ENCODE measurements at regions of chr19 and their contacts with region 1.

Region 1: GRCh38 chr19:19865739-19866481 is at the start of gene ZNF253:
- DNase-seq: peak; percentile 82
- ATAC-seq: peak; percentile 90
- H3K4me3 Mint-ChIP-seq: peak within 1 kb of the TSS; percentile 100
- H3K27ac Mint-ChIP-seq: peak within 1 kb of the TSS; percentile 99
- H3K4me1 Mint-ChIP-seq: peaks cover 34% of the 10 kb centered on the region
- H3K27me3 Mint-ChIP-seq: no peaks in the 10 kb centered on the region
- CTCF ChIP-seq: no peak
- total RNA-seq, gene ZNF253: 24.7 and 26.3 TPM in 2 replicates

Region 2: DNA sequence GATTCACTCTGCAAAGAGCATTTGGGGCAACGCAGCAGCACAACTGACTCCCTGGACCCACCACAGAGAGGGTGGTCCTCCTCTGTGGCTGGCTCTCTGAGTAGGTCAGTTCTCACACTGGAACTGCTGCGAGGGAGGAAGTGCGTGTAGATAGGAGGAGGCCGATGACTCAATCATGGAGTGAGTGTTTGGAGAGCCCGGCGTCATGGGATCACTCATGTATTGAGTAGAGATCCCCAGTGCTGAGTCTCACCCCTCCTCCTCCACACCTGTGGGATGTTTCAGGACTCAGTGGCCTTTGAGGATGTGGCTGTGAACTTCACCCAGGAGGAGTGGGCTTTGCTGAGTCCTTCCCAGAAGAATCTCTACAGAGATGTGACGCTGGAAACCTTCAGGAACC is 188.3 kb before region 1 on chr19:
- CTCF ChIA-PET with region 1: no interaction called
- POLR2A ChIA-PET with region 1: no interaction called
- intact Hi-C with region 1: no loop called
- DNase-seq: no peak
- ATAC-seq: no peak
- H3K4me3 Mint-ChIP-seq: no peak overlapping the region
- H3K27ac Mint-ChIP-seq: no peak overlapping the region
- H3K4me1 Mint-ChIP-seq: peaks cover 12% of the 10 kb centered on the region
- H3K27me3 Mint-ChIP-seq: no peaks in the 10 kb centered on the region
- CTCF ChIP-seq: no peak

Region 3: GRCh38 chr19:19732579-19733501 is 133.1 kb before region 1 on chr19 and contains the start of gene ZNF14:
- CTCF ChIA-PET with region 1: no interaction called
- POLR2A ChIA-PET with region 1: interaction called, 18 read pairs
- intact Hi-C with region 1: loop called (anchors 2 kb)
- DNase-seq: peak; percentile 79
- ATAC-seq: peak; percentile 99
- H3K4me3 Mint-ChIP-seq: peak within 1 kb of the TSS; percentile 99
- H3K27ac Mint-ChIP-seq: peak within 1 kb of the TSS; percentile 96
- H3K4me1 Mint-ChIP-seq: peaks cover 28% of the 10 kb centered on the region
- H3K27me3 Mint-ChIP-seq: no peaks in the 10 kb centered on the region
- CTCF ChIP-seq: no peak
- total RNA-seq, gene ZNF14: 11.8 and 13.4 TPM in 2 replicates

Region 4: GRCh38 chr19:19849056-19849455 is 16.9 kb before region 1 on chr19:
- CTCF ChIA-PET with region 1: interaction called, 4 read pairs
- POLR2A ChIA-PET with region 1: interaction called, 20 read pairs
- intact Hi-C with region 1: no loop called
- DNase-seq: no peak
- ATAC-seq: peak; percentile 58
- H3K4me3 Mint-ChIP-seq: peak overlapping the region; percentile 15
- H3K27ac Mint-ChIP-seq: peak overlapping the region; percentile 59
- H3K4me1 Mint-ChIP-seq: peaks cover 24% of the 10 kb centered on the region
- H3K27me3 Mint-ChIP-seq: no peaks in the 10 kb centered on the region
- CTCF ChIP-seq: no peak

Region 5: GRCh38 chr19:19937403-19937802 is 71.5 kb after region 1 on chr19:
- CTCF ChIA-PET with region 1: no interaction called
- POLR2A ChIA-PET with region 1: interaction called, 3 read pairs
- intact Hi-C with region 1: loop called (anchors 10 kb)
- DNase-seq: no peak
- ATAC-seq: no peak
- H3K4me3 Mint-ChIP-seq: peak overlapping the region; percentile 11
- H3K27ac Mint-ChIP-seq: peak overlapping the region; percentile 46
- H3K4me1 Mint-ChIP-seq: peaks cover 18% of the 10 kb centered on the region
- H3K27me3 Mint-ChIP-seq: no peaks in the 10 kb centered on the region
- CTCF ChIP-seq: no peak

Region 6: DNA sequence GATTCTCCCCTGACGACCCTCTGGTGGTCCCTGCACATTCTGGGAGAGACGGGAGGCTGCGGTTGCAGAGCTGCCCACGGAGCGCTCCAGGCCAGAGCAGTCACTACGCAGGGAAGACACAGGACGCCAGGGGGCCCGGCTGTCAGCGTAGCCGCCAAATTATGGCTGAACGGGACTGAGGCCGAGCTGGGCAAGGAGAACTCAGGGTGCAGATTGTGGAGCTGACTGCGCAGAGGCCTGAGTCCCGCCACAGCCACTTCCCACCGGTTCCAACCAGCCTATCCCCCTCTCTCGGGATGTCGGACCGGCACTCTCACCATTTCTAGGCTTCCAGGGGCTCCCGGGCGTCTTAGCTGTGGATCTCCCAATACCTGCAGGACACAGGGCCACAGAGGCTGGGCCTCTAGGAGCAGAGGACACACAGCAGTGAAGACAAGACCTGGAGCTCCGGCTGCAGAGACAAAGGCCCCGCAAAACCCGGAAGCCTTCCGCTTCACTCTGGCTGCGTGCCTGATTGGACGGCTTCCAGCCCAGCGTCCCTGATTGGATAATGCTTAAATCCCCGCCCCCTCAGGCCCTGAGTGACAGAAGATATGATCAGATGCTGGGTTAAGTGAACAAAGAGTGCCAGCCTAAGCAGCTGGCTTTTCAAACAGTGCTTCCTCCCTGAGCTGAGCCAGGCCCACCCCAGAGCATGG is 699.6 kb after region 1 on chr19 and contains the start of gene ZNF737:
- CTCF ChIA-PET with region 1: no interaction called
- POLR2A ChIA-PET with region 1: interaction called, 12 read pairs
- intact Hi-C with region 1: no loop called
- DNase-seq: peak; percentile 72
- ATAC-seq: peak; percentile 90
- H3K4me3 Mint-ChIP-seq: peak within 1 kb of the TSS; percentile 99
- H3K27ac Mint-ChIP-seq: peak within 1 kb of the TSS; percentile 99
- H3K4me1 Mint-ChIP-seq: peaks cover 32% of the 10 kb centered on the region
- H3K27me3 Mint-ChIP-seq: no peaks in the 10 kb centered on the region
- CTCF ChIP-seq: no peak
- total RNA-seq, gene ZNF737: 42.7 and 50.9 TPM in 2 replicates